IMR-90 (cell line): ENCODE measurements at regions of chr19 and their contacts with region 1.

Region 1: GRCh38 chr19:11528551-11529341 is at the start of gene ECSIT:
- DNase-seq: peak; percentile 98
- ATAC-seq: peak; percentile 97
- H3K4me3 ChIP-seq: peak within 1 kb of the TSS; percentile 74
- H3K27ac ChIP-seq: peak within 1 kb of the TSS; percentile 74
- H3K4me1 ChIP-seq: peaks cover 5% of the 10 kb centered on the region
- H3K27me3 ChIP-seq: no peaks in the 10 kb centered on the region
- CTCF ChIP-seq: no peak
- POLR2A ChIP-seq: peak; percentile 57
- RAD21 ChIP-seq: no peak
- total RNA-seq, gene ECSIT: 31.9 and 42.3 TPM in 2 replicates

Region 2: DNA sequence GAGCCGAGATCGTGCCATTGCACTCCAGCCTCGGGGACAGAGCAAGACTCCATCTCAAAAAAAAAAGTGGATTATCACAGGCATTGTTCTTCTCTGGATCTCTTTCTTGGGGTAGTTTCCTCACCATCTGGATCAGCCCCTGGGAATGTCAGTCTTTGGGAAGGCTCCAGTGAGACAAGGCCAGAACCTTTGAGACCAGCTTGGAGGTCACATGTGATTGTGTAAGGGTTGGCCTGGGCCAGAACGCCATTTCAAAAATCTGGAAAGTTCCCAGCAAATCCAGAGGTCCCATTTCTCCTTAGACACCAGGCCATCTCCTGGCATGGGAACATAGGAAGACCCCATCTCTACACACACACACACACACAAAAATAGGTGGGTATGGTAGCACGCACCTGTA is 303.6 kb before region 1 on chr19:
- CTCF ChIA-PET with region 1: no interaction called
- POLR2A ChIA-PET with region 1: interaction called, 13 read pairs
- dilution Hi-C with region 1: no loop called
- in situ Hi-C with region 1: no loop called
- intact Hi-C with region 1: no loop called
- DNase-seq: no peak
- ATAC-seq: no peak
- H3K4me3 ChIP-seq: no peak overlapping the region
- H3K27ac ChIP-seq: no peak overlapping the region
- H3K4me1 ChIP-seq: no peaks in the 10 kb centered on the region
- H3K27me3 ChIP-seq: no peaks in the 10 kb centered on the region
- CTCF ChIP-seq: no peak
- POLR2A ChIP-seq: no peak
- RAD21 ChIP-seq: no peak